Caco-2 (cell line): ENCODE measurements at regions of chr17 and their contacts with region 1.

Region 1: DNA sequence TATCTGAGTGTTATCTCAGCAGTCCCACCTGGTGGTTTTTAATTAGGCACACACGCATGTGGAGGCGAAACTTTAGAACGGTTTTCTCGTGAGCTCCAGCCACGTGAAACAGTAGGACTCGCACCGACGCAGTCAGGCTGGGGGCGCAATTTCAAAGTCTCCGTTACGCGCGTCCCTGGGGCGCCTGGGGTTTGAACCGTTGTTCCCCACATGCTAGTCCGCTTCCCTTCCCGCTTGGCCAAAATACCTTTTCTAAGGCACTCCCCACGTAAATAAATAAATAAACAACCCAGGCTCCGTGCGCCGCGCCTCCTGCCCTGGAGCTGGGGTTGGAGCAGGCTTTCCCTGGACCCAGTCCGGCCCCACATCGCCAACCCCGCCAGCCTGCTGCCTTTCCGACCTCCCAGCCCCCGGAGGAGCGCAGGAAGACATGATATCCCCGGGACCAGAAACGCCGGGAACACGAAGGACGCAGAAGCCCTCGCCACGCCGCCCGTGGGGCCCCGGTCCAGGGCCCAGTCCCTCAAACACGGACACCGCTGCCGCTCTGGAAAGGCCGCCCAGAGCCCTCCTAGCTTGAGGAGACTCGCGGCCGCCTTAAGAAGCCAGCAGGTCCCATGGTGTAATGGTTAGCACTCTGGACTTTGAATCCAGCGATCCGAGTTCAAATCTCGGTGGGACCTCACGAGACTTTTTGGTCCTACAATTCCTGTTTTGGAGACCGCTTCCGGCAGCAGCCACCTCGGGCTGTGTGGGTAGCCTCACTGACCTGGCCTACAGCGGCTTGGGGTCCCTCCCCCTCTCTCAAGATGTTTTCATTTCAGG is 18.2 kb downstream of the GNGT2 start:
- DNase-seq: peak; percentile 92 to 99
- H3K4me3 ChIP-seq: peak overlapping the region; percentile 72
- H3K4me3 Mint-ChIP-seq: peak overlapping the region; percentile 73
- H3K27ac Mint-ChIP-seq: peak overlapping the region; percentile 95
- H3K4me1 ChIP-seq: no peaks in the 10 kb centered on the region; the same call in 1 of the 2 replicates
- H3K4me1 Mint-ChIP-seq: peaks cover 14% of the 10 kb centered on the region
- H3K27me3 ChIP-seq: no peaks in the 10 kb centered on the region
- H3K27me3 Mint-ChIP-seq: no peaks in the 10 kb centered on the region
- CTCF ChIP-seq: peak; percentile 44 to 69

Region 2: GRCh38 chr17:48892940-48893645 is 299.0 kb before region 1 on chr17:
- CTCF ChIA-PET with region 1: interaction called, 9 read pairs
- POLR2A ChIA-PET with region 1: interaction called, 9 read pairs
- intact Hi-C with region 1: loop called (anchors 5 kb)
- DNase-seq: no peak
- H3K4me3 ChIP-seq: peak overlapping the region; percentile 73
- H3K4me3 Mint-ChIP-seq: peak overlapping the region; percentile 84
- H3K27ac Mint-ChIP-seq: peak overlapping the region; percentile 90
- H3K4me1 ChIP-seq: peaks cover 13% of the 10 kb centered on the region
- H3K4me1 Mint-ChIP-seq: peaks cover 12% of the 10 kb centered on the region
- H3K27me3 ChIP-seq: no peaks in the 10 kb centered on the region
- H3K27me3 Mint-ChIP-seq: peaks cover 2% of the 10 kb centered on the region
- CTCF ChIP-seq: no peak

Region 3: DNA sequence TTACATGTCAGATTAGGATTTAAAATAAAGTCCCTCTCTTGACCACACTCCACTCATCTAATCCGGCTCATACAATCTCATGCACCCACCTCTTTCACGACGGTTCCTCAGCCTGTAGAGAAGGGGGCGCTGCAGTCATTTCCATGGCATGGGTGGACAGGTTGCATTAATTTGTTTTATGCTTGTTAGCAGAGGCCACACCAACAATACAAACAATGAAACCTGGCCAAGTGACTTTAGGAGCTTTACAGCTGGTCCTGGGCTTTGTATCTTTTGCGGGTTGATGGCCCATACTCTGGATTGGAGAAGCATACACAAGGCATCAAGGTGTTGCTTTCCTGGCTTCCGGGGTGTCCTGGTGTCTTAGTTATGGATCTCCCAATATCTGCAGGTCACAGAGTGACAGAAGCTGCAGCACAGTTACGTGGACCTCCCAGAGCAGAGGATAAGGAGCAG is 237.8 kb before region 1 on chr17:
- CTCF ChIA-PET with region 1: no interaction called
- POLR2A ChIA-PET with region 1: no interaction called
- intact Hi-C with region 1: loop called (anchors 10 kb)
- DNase-seq: peak; percentile 89 to 91
- H3K4me3 ChIP-seq: no peak overlapping the region
- H3K4me3 Mint-ChIP-seq: no peak overlapping the region
- H3K27ac Mint-ChIP-seq: peak overlapping the region; percentile 47
- H3K4me1 ChIP-seq: peaks cover 13% of the 10 kb centered on the region
- H3K4me1 Mint-ChIP-seq: peaks cover 10% of the 10 kb centered on the region
- H3K27me3 ChIP-seq: no peaks in the 10 kb centered on the region
- H3K27me3 Mint-ChIP-seq: no peaks in the 10 kb centered on the region
- CTCF ChIP-seq: peak; percentile 94 to 97

Region 4: GRCh38 chr17:49053171-49053829 is 138.8 kb before region 1 on chr17:
- CTCF ChIA-PET with region 1: no interaction called
- POLR2A ChIA-PET with region 1: no interaction called
- intact Hi-C with region 1: loop called (anchors 5 kb)
- DNase-seq: no peak
- H3K4me3 ChIP-seq: no peak overlapping the region
- H3K4me3 Mint-ChIP-seq: no peak overlapping the region
- H3K27ac Mint-ChIP-seq: peak overlapping the region; percentile 31
- H3K4me1 ChIP-seq: peaks cover 9% of the 10 kb centered on the region; the same call in 1 of the 2 replicates
- H3K4me1 Mint-ChIP-seq: peaks cover 14% of the 10 kb centered on the region
- H3K27me3 ChIP-seq: no peaks in the 10 kb centered on the region
- H3K27me3 Mint-ChIP-seq: no peaks in the 10 kb centered on the region
- CTCF ChIP-seq: no peak

Region 5: GRCh38 chr17:49132699-49133364 is 59.3 kb before region 1 on chr17 and contains the start of gene B4GALNT2:
- CTCF ChIA-PET with region 1: no interaction called
- POLR2A ChIA-PET with region 1: no interaction called
- intact Hi-C with region 1: loop called (anchors 5 kb)
- DNase-seq: peak; percentile 79
- H3K4me3 ChIP-seq: peak within 1 kb of the TSS; percentile 58
- H3K4me3 Mint-ChIP-seq: peak within 1 kb of the TSS; percentile 84
- H3K27ac Mint-ChIP-seq: peak within 1 kb of the TSS; percentile 50
- H3K4me1 ChIP-seq: peaks cover 6% of the 10 kb centered on the region; the same call in 1 of the 2 replicates
- H3K4me1 Mint-ChIP-seq: peaks cover 8% of the 10 kb centered on the region
- H3K27me3 ChIP-seq: peaks cover 2% of the 10 kb centered on the region; the same call in 1 of the 2 replicates
- H3K27me3 Mint-ChIP-seq: no peaks in the 10 kb centered on the region
- CTCF ChIP-seq: no peak
- total RNA-seq, gene B4GALNT2: 1.1 and 1.3 TPM in 2 replicates